CD4-positive, alpha-beta T cell (primary cell): ENCODE measurements at regions of chr6 and their contacts with region 1.

Region 1: GRCh38 chr6:147202516-147203312 is 1.5 kb upstream of the STXBP5 start:
- DNase-seq: peak; percentile 60 to 96 (median 70)
- ATAC-seq: peak; percentile 84
- H3K4me3 ChIP-seq: peak overlapping the region; percentile 86
- H3K4me3 Mint-ChIP-seq: peak overlapping the region; percentile 94
- H3K27ac ChIP-seq: peak overlapping the region; percentile 89 to 94
- H3K27ac Mint-ChIP-seq: peak overlapping the region; percentile 95
- H3K4me1 ChIP-seq: peaks cover 15% of the 10 kb centered on the region
- H3K4me1 Mint-ChIP-seq: peaks cover 38% of the 10 kb centered on the region
- H3K27me3 ChIP-seq: no peaks in the 10 kb centered on the region
- H3K27me3 Mint-ChIP-seq: no peaks in the 10 kb centered on the region
- CTCF ChIP-seq: no peak

Region 2: DNA sequence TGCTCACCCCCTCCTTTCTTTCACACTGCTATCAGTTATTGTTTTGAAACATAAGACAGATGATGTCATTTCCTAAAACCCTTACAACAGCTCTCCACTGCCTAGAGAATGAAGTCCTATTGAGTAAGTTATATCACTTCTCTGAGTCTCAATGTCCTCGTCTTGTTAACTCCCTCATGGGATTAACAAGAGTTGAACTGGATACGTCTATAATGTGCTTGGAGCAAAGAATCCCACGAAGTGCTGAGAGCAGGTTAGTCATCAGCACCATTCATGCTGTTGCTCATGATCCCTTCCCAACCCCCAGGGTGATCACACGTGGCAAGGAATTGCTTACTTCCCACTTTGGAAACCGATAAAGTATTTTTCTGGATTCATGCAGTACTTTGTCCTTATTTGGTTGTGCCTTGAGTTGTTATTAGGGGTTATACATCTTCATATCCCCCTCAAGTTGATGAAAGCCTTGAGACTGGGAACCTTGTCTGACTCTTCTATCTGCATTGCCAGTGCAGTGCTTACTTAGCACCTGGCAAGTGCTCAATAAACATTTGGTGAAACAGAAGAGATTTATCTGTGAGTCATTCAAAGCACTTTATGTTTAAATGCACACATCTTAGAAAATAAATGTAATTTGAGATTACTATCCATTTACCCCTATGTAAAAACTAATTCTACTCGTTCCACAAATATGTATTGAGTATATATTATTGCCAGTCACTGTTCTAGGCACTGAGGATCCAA is 1954.9 kb before region 1 on chr6:
- CTCF ChIA-PET with region 1: no interaction called
- POLR2A ChIA-PET with region 1: no interaction called
- intact Hi-C with region 1: no loop called
- DNase-seq: no peak
- ATAC-seq: no peak
- H3K4me3 ChIP-seq: no peak overlapping the region
- H3K4me3 Mint-ChIP-seq: no peak overlapping the region
- H3K27ac ChIP-seq: no peak overlapping the region
- H3K27ac Mint-ChIP-seq: no peak overlapping the region
- H3K4me1 ChIP-seq: no peaks in the 10 kb centered on the region
- H3K4me1 Mint-ChIP-seq: no peaks in the 10 kb centered on the region
- H3K27me3 ChIP-seq: no peaks in the 10 kb centered on the region
- H3K27me3 Mint-ChIP-seq: peaks cover 18% of the 10 kb centered on the region
- CTCF ChIP-seq: no peak

Region 3: DNA sequence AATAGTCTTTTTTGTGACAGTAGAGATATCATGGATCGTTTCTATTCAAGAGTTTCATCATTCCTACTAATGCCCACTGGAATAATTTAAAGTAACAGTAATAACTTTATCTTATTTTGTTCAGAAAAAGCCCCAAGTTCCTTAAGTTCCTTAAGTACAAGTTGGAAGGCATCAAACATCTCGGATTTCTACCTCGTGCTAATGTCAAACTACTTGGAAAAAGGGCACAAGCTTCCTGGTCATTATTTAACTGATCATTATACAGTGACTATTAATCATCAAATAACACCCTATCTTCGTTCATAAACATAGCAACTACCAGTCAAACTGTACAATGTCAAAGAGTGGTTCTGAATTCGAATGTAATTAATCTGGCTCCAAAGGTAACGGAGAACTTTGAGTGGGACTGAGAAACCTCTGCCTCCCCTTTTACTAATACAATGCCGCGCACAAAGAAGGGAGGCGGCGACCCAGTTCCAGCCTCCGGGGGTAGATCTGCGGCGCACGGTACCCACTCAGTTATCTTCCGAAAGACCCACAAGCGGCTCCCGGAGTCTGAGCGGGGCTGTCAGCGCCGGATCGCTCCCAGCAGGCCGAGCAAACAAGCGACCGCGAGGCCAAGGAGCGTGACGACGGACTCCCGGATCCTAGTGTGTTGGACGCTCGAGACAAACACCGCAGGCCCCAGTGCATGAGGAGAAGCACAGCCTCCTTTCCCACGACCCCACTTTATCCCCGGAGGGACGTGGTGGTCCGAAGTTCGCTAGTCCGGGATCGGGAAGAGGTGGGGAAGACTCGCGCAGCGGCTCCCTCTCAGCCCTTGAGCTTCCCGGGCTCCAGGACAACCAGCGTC is 1239.3 kb before region 1 on chr6:
- CTCF ChIA-PET with region 1: no interaction called
- POLR2A ChIA-PET with region 1: no interaction called
- intact Hi-C with region 1: loop called in 1 of 2 experiments (anchors 10 kb)
- DNase-seq: peak; percentile 5 to 64 (median 26)
- ATAC-seq: peak; percentile 15
- H3K4me3 ChIP-seq: peak overlapping the region; percentile 76
- H3K4me3 Mint-ChIP-seq: peak overlapping the region; percentile 96
- H3K27ac ChIP-seq: no peak overlapping the region
- H3K27ac Mint-ChIP-seq: peak overlapping the region; percentile 98
- H3K4me1 ChIP-seq: peaks cover 7% of the 10 kb centered on the region
- H3K4me1 Mint-ChIP-seq: peaks cover 58% of the 10 kb centered on the region
- H3K27me3 ChIP-seq: no peaks in the 10 kb centered on the region
- H3K27me3 Mint-ChIP-seq: no peaks in the 10 kb centered on the region
- CTCF ChIP-seq: no peak

Region 4: DNA sequence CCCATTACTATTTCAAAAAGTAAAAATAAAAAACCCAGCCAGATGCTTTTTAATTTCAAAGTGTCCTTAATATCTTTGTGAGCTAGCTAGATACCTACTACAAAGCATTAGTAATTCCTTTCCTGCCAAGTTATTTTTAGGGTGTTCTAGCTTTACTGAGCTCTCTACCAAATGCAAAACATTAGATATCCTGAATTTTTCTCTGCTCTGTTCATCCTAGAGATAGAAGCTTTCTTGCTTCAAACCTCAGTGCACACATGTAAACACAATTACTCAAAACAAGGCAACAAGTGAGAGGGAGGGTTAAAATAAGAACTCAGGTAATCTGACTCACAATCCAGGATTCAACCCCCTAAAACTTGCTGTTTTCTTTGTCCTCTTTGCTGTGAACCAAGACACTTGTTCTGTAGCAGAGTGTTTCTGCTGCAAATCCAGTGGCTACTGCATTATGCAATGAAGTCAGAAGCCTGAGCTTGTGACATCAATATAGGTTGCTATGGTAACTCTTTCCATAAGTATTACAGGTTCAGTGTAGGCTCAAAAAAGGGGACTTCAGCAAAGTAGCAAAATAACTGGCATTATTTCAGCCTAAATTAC is 71.1 kb before region 1 on chr6:
- CTCF ChIA-PET with region 1: no interaction called
- POLR2A ChIA-PET with region 1: no interaction called
- intact Hi-C with region 1: no loop called
- DNase-seq: peak in 2 of 14 experiments; percentile 4 to 13
- ATAC-seq: peak; percentile 21
- H3K4me3 ChIP-seq: no peak overlapping the region
- H3K4me3 Mint-ChIP-seq: no peak overlapping the region
- H3K27ac ChIP-seq: no peak overlapping the region
- H3K27ac Mint-ChIP-seq: no peak overlapping the region
- H3K4me1 ChIP-seq: no peaks in the 10 kb centered on the region
- H3K4me1 Mint-ChIP-seq: peaks cover 8% of the 10 kb centered on the region
- H3K27me3 ChIP-seq: no peaks in the 10 kb centered on the region
- H3K27me3 Mint-ChIP-seq: no peaks in the 10 kb centered on the region
- CTCF ChIP-seq: no peak

Region 5: DNA sequence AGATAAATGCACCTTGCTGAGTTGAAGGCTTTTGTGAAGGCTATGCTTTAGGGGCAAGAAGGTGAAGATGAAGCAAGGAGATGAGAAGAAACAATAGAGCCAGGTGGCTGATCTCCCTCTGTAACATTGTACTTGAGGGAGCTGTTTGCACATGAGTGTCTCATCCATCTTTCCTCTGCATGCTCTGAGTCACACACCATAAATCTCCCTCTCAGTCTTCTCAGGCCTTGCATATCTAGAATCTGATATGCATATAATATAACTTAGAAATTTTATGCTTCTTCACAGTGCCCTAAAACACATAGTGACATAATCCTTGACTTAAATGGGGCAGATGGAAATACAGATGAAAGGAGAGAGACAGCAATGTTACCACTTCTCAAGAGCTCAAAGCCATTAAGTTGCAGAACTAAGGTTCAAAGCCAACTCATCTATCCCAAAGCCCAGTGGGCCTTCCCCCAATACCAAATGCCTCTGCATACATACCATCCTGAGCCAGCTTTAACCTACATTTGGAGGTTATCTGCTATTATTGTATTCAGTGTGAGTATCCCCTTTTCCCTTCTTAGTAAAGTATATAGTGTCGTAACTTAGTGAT is 60.9 kb before region 1 on chr6:
- CTCF ChIA-PET with region 1: no interaction called
- POLR2A ChIA-PET with region 1: no interaction called
- intact Hi-C with region 1: no loop called
- DNase-seq: no peak
- ATAC-seq: no peak
- H3K4me3 ChIP-seq: no peak overlapping the region
- H3K4me3 Mint-ChIP-seq: no peak overlapping the region
- H3K27ac ChIP-seq: no peak overlapping the region
- H3K27ac Mint-ChIP-seq: no peak overlapping the region
- H3K4me1 ChIP-seq: no peaks in the 10 kb centered on the region
- H3K4me1 Mint-ChIP-seq: no peaks in the 10 kb centered on the region
- H3K27me3 ChIP-seq: no peaks in the 10 kb centered on the region
- H3K27me3 Mint-ChIP-seq: no peaks in the 10 kb centered on the region
- CTCF ChIP-seq: no peak

Region 6: GRCh38 chr6:147222160-147222838 is 19.6 kb after region 1 on chr6:
- CTCF ChIA-PET with region 1: no interaction called
- POLR2A ChIA-PET with region 1: interaction called, 8 read pairs
- intact Hi-C with region 1: loop called in 1 of 2 experiments (anchors 1 kb)
- DNase-seq: peak in 3 of 14 experiments; percentile 28 to 42 (median 41)
- ATAC-seq: peak; percentile 75
- H3K4me3 ChIP-seq: no peak overlapping the region
- H3K4me3 Mint-ChIP-seq: no peak overlapping the region
- H3K27ac ChIP-seq: no peak overlapping the region
- H3K27ac Mint-ChIP-seq: no peak overlapping the region
- H3K4me1 ChIP-seq: no peaks in the 10 kb centered on the region
- H3K4me1 Mint-ChIP-seq: peaks cover 58% of the 10 kb centered on the region
- H3K27me3 ChIP-seq: no peaks in the 10 kb centered on the region
- H3K27me3 Mint-ChIP-seq: no peaks in the 10 kb centered on the region
- CTCF ChIP-seq: peak; percentile 37

Region 7: DNA sequence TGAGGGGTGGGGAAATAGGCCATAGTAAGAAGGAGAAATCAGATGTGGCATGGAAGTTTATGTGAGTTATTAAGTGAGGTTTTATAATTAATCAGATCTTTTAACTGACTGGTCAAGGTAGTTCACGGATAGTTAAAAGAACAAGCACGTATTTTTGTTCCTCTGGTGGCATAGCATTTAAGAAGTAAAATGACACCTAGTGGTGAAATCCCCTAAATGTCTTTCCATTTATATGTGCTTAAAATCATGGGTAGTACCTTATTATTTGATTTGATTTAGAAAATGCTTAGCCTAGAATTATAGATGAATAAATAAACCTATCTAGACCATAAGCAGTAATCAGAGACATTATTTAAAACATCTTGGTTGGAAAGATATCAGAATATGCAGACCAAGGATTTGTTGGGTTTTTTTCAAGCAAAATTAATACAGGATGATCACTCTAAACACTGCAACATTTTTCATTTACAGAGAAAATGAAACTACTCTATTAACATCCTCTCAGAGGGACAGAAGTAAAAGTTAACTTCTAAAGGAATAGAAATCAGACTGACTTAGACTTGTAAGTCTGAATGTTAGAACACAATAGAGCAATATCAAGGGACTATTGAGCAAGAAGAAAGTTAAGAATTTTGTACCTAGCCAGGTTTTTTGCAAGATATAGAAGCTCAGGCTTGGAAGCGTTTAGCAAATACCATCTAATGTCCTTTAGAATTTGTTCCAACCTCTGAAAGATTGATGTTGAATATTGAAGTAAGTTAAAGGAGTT is 82.6 kb after region 1 on chr6:
- CTCF ChIA-PET with region 1: interaction called, 3 read pairs
- POLR2A ChIA-PET with region 1: interaction called, 4 read pairs
- intact Hi-C with region 1: loop called in 1 of 2 experiments (anchors 5 kb)
- DNase-seq: peak in 3 of 14 experiments; percentile 41 to 50 (median 48)
- ATAC-seq: no peak
- H3K4me3 ChIP-seq: no peak overlapping the region
- H3K4me3 Mint-ChIP-seq: no peak overlapping the region
- H3K27ac ChIP-seq: no peak overlapping the region
- H3K27ac Mint-ChIP-seq: peak overlapping the region; percentile 2
- H3K4me1 ChIP-seq: no peaks in the 10 kb centered on the region
- H3K4me1 Mint-ChIP-seq: peaks cover 27% of the 10 kb centered on the region
- H3K27me3 ChIP-seq: no peaks in the 10 kb centered on the region
- H3K27me3 Mint-ChIP-seq: no peaks in the 10 kb centered on the region
- CTCF ChIP-seq: peak; percentile 77